MCF 10A (cell line): ENCODE measurements at regions of chr3 and their contacts with region 1.

Region 1: DNA sequence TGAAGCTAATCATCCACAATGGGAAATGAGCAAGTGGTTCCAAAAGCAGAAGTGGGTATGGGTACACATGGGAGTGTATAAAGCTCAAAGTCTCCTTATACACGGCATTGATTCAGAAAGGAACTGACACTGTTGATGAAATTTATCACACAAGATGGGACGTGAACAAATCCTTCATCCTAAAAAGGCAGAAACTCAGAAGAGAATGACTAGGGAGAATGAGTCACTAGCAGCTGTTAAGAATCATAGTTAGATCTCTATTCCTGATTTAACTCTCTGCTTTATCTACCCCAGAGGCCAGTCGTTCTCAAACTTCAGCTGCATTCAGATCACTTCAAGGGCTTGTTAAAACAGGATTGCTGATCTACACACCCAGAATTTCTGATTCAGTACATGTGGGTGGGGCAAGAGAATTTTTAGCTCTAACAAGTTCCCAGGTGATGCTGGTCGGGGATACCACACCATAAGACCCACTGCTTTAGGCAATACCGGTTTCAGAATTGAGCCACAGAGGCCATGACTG is 97.7 kb upstream of the PHLDB2 start:
- DNase-seq: peak; percentile 73
- H3K4me3 Mint-ChIP-seq: peak overlapping the region; percentile 45
- H3K27ac Mint-ChIP-seq: peak overlapping the region; percentile 96
- H3K4me1 Mint-ChIP-seq: peaks cover 30% of the 10 kb centered on the region
- H3K27me3 Mint-ChIP-seq: no peaks in the 10 kb centered on the region
- CTCF ChIP-seq: no peak

Region 2: GRCh38 chr3:111096487-111097209 is 664.7 kb before region 1 on chr3:
- CTCF ChIA-PET with region 1: no interaction called
- POLR2A ChIA-PET with region 1: no interaction called
- intact Hi-C with region 1: no loop called
- DNase-seq: no peak
- H3K4me3 Mint-ChIP-seq: no peak overlapping the region
- H3K27ac Mint-ChIP-seq: no peak overlapping the region
- H3K4me1 Mint-ChIP-seq: peaks cover 20% of the 10 kb centered on the region
- H3K27me3 Mint-ChIP-seq: no peaks in the 10 kb centered on the region
- CTCF ChIP-seq: no peak

Region 3: GRCh38 chr3:111729087-111729846 is 32.1 kb before region 1 on chr3:
- CTCF ChIA-PET with region 1: no interaction called
- POLR2A ChIA-PET with region 1: interaction called, 13 read pairs
- intact Hi-C with region 1: loop called (anchors 5 kb)
- DNase-seq: peak; percentile 79
- H3K4me3 Mint-ChIP-seq: peak overlapping the region; percentile 25
- H3K27ac Mint-ChIP-seq: peak overlapping the region; percentile 62
- H3K4me1 Mint-ChIP-seq: peaks cover 30% of the 10 kb centered on the region
- H3K27me3 Mint-ChIP-seq: no peaks in the 10 kb centered on the region
- CTCF ChIP-seq: no peak

Region 4: GRCh38 chr3:111745786-111746185 is 15.6 kb before region 1 on chr3:
- CTCF ChIA-PET with region 1: interaction called, 6 read pairs
- POLR2A ChIA-PET with region 1: interaction called, 67 read pairs
- intact Hi-C with region 1: no loop called
- DNase-seq: no peak
- H3K4me3 Mint-ChIP-seq: no peak overlapping the region
- H3K27ac Mint-ChIP-seq: peak overlapping the region; percentile 91
- H3K4me1 Mint-ChIP-seq: peaks cover 16% of the 10 kb centered on the region
- H3K27me3 Mint-ChIP-seq: no peaks in the 10 kb centered on the region
- CTCF ChIP-seq: no peak

Region 5: GRCh38 chr3:111810909-111811308 is 49.5 kb after region 1 on chr3:
- CTCF ChIA-PET with region 1: interaction called, 4 read pairs
- POLR2A ChIA-PET with region 1: interaction called, 18 read pairs
- intact Hi-C with region 1: no loop called
- DNase-seq: peak; percentile 86
- H3K4me3 Mint-ChIP-seq: no peak overlapping the region
- H3K27ac Mint-ChIP-seq: peak overlapping the region; percentile 80
- H3K4me1 Mint-ChIP-seq: peaks cover 43% of the 10 kb centered on the region
- H3K27me3 Mint-ChIP-seq: no peaks in the 10 kb centered on the region
- CTCF ChIP-seq: no peak

Region 6: DNA sequence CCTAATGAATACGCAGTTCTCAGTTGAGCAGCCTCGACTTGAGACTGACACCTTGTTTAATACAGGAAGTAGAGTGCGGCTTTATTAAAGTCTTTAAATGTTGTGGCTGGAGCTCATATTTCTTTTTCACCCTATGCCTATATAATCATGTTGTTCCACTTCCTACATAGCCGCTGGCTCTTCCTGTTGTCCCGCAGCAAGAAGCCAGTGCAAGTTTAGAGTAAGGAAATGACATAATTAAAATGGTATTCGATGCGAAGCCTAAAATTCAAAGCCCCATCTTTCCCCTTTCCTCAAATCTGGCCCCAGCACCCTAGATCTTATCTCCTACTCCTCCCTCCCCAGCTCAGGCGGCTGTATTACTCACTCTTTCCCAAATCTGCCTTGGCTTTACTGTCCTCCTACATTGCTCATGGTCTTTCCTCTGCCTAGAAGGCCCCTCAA is 90.2 kb after region 1 on chr3:
- CTCF ChIA-PET with region 1: no interaction called
- POLR2A ChIA-PET with region 1: interaction called, 12 read pairs
- intact Hi-C with region 1: no loop called
- DNase-seq: peak; percentile 87
- H3K4me3 Mint-ChIP-seq: no peak overlapping the region
- H3K27ac Mint-ChIP-seq: peak overlapping the region; percentile 77
- H3K4me1 Mint-ChIP-seq: peaks cover 37% of the 10 kb centered on the region
- H3K27me3 Mint-ChIP-seq: no peaks in the 10 kb centered on the region
- CTCF ChIP-seq: no peak